Endothelial cell of umbilical vein (primary cell): ENCODE measurements at regions of chr11 and their contacts with region 1.

Region 1: GRCh38 chr11:36289226-36289852 is at the start of gene COMMD9:
- DNase-seq: peak; percentile 93
- H3K4me3 ChIP-seq: peak within 1 kb of the TSS; percentile 73 to 95 (median 75)
- H3K27ac ChIP-seq: peak within 1 kb of the TSS; percentile 32
- H3K4me1 ChIP-seq: peaks cover 9% of the 10 kb centered on the region
- H3K27me3 ChIP-seq: no peaks in the 10 kb centered on the region
- CTCF ChIP-seq: no peak
- POLR2A ChIP-seq: peak; percentile 77
- total RNA-seq, gene COMMD9: 78.9 and 79.0 TPM in 2 replicates

Region 2: GRCh38 chr11:36361901-36362391 is 72.6 kb after region 1 on chr11:
- CTCF ChIA-PET with region 1: interaction called, 10 read pairs
- POLR2A ChIA-PET with region 1: no interaction called
- dilution Hi-C with region 1: no loop called
- intact Hi-C with region 1: loop called (anchors 5 kb)
- DNase-seq: no peak
- H3K4me3 ChIP-seq: no peak overlapping the region
- H3K27ac ChIP-seq: no peak overlapping the region
- H3K4me1 ChIP-seq: peaks cover 16% of the 10 kb centered on the region
- H3K27me3 ChIP-seq: peaks cover 5 to 8% of the 10 kb centered on the region in 2 experiments
- CTCF ChIP-seq: no peak
- POLR2A ChIP-seq: no peak

Region 3: DNA sequence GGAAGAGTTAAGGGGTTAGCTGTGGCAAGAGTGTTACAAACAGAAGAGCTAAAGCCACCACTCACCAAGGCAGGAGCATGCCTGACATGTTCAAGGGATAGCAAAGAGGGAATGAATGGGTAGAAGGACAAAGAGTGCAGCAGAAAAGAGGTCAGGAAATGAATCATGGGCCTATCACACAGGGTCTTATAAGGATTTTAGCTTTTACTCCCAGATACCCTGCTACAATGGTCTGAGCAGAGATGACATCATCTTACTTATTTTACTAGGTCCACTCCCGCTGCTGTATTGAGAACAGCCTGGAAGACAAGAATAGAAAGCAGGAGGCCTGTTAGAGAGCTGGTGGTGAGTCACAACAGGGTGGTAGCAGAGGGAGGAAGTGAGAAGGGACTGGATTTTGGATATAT is 211.0 kb after region 1 on chr11:
- CTCF ChIA-PET with region 1: interaction called, 167 read pairs
- POLR2A ChIA-PET with region 1: interaction called, 8 read pairs
- dilution Hi-C with region 1: no loop called
- intact Hi-C with region 1: no loop called
- DNase-seq: peak; percentile 89
- H3K4me3 ChIP-seq: no peak overlapping the region
- H3K27ac ChIP-seq: peak overlapping the region; percentile 79
- H3K4me1 ChIP-seq: peaks cover 19% of the 10 kb centered on the region
- H3K27me3 ChIP-seq: no peaks in the 10 kb centered on the region
- CTCF ChIP-seq: no peak
- POLR2A ChIP-seq: peak; percentile 33

Region 4: DNA sequence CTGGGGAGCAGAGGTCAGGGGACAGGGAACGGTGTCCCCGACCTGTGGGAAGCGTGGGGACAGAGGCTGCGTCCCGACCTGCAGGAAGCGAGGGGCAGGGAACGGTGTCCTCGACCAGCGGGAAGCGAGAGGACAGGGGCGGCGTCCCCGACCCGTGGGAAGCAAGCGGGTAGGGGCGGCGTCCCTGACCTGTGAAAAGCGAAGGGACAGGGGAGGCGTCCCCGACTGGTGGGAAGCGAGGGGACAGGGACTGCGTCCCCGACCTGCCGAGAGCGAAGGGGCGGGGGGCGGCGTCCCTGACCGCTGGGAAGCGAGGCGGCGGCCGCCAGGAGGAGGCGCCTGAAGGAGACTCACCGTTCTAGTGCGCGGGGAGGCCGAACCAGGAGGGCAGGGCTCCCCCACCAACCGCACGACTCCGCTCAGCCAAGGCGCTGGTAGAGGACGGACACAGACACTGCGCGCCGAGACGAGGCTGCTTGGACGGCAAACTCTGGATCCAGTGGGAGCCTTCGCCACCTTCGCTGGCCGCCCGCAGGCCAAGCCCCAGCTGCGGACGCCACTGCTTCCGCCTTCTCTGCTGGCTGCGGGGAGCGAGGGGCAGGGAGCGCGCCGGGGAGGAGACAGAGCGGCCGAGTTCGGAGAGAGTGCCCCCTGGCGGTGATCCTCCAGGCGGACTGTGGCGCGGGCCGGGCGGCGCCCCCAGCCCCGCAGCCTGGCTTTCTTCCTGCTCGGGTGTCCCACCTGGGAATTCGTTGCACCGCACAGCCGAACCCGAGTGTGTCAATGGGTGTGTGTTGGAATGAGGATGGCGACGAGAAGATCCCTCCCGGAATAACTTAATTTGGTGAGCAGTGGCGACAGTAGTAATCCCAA is 220.6 kb after region 1 on chr11 and contains the start of gene TRAF6:
- CTCF ChIA-PET with region 1: interaction called, 7 read pairs
- POLR2A ChIA-PET with region 1: no interaction called
- dilution Hi-C with region 1: no loop called
- intact Hi-C with region 1: loop called (anchors 1 kb)
- DNase-seq: peak; percentile 91
- H3K4me3 ChIP-seq: peak within 1 kb of the TSS; percentile 77 to 100 (median 88)
- H3K27ac ChIP-seq: peak within 1 kb of the TSS; percentile 50
- H3K4me1 ChIP-seq: peaks cover 16% of the 10 kb centered on the region
- H3K27me3 ChIP-seq: no peaks in the 10 kb centered on the region
- CTCF ChIP-seq: peak; percentile 90 to 92
- POLR2A ChIP-seq: peak; percentile 94
- total RNA-seq, gene TRAF6: 13.1 and 14.2 TPM in 2 replicates

Region 5: GRCh38 chr11:36541001-36541400 is 251.7 kb after region 1 on chr11:
- CTCF ChIA-PET with region 1: interaction called, 22 read pairs
- POLR2A ChIA-PET with region 1: no interaction called
- dilution Hi-C with region 1: no loop called
- intact Hi-C with region 1: loop called (anchors 1 kb)
- DNase-seq: peak; percentile 67
- H3K4me3 ChIP-seq: no peak overlapping the region
- H3K27ac ChIP-seq: no peak overlapping the region
- H3K4me1 ChIP-seq: peaks cover 3% of the 10 kb centered on the region
- H3K27me3 ChIP-seq: peaks cover 4 to 6% of the 10 kb centered on the region in 2 experiments
- CTCF ChIP-seq: peak; percentile 30 to 46
- POLR2A ChIP-seq: no peak

Region 6: GRCh38 chr11:36672813-36673450 is 383.6 kb after region 1 on chr11:
- CTCF ChIA-PET with region 1: interaction called, 3 read pairs
- POLR2A ChIA-PET with region 1: no interaction called
- dilution Hi-C with region 1: no loop called
- intact Hi-C with region 1: loop called (anchors 5 kb)
- DNase-seq: peak; percentile 53
- H3K4me3 ChIP-seq: no peak overlapping the region
- H3K27ac ChIP-seq: no peak overlapping the region
- H3K4me1 ChIP-seq: no peaks in the 10 kb centered on the region
- H3K27me3 ChIP-seq: no peaks in the 10 kb centered on the region
- CTCF ChIP-seq: peak; percentile 41 to 44
- POLR2A ChIP-seq: no peak